Activated CD4-positive, alpha-beta T cell treated with anti-CD3 and anti-CD28 coated beads, Interleukin-2, amount 10 ng/mL, durations not matched to agents 24 days and 14 days (primary cell): ENCODE measurements at regions of chr10 and their contacts with region 1.

Region 1: DNA sequence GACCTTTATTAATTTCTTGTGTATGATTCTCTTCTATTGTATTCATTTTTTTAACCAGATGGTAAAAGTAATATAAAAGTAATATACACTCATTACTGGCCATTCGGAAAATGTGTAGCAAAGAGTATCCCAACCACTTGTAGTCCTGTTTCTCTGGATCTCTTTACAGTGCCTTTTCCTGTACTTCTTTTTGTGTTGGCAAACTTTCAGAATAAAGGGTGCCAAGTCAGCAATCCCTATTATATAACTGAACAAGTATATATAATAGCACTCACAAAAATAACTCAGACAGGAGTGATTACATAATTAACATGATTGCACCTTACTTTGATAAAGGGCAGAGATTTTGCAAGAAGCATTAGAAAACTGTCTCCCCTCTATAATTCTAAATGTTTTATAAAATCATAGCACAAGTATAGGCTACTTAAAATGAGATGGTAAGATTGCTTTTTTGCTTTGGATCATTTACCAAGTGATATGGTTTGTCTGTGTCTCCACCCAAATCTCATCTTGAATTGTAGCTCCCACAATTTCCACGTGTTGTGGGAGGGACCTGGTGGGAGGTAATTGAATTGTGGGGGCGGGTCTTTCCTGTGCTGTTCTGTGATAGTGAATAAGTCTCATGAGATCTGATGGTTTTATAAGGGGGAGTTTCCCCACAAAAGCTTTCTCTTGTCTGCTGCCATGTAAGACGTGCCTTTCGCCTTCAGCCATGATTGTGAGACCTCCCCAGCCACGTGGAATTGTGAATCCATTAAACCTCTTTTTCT is 41.5 kb upstream of the EPC1 start:
- DNase-seq: peak; percentile 30
- H3K4me3 Mint-ChIP-seq: no peak overlapping the region
- H3K27ac Mint-ChIP-seq: no peak overlapping the region
- H3K4me1 Mint-ChIP-seq: peaks cover 3% of the 10 kb centered on the region
- H3K27me3 Mint-ChIP-seq: no peaks in the 10 kb centered on the region

Region 2: DNA sequence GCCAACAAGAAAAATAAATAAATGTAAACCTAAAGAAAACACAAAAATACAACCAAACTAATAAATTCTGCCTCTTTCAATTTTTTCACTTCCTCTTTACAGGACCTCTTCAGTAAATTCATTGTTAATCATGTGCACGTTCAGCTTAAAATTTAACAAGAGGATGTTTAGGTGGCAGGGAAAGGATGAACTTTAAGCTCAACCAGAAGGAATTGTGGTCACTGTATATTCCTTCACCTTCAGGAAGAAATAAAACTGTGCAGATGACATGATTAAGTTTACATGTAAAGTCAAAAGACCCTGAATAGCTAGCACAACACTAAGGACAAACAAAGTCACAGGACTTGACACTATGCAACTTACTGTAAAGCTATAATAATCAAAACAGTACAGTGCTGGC is 365.2 kb before region 1 on chr10:
- intact Hi-C with region 1: no loop called
- DNase-seq: no peak
- H3K4me3 Mint-ChIP-seq: no peak overlapping the region
- H3K27ac Mint-ChIP-seq: no peak overlapping the region
- H3K4me1 Mint-ChIP-seq: peaks cover 3% of the 10 kb centered on the region
- H3K27me3 Mint-ChIP-seq: no peaks in the 10 kb centered on the region

Region 3: GRCh38 chr10:32308027-32308603 is 80.3 kb before region 1 on chr10:
- intact Hi-C with region 1: no loop called
- DNase-seq: no peak
- H3K4me3 Mint-ChIP-seq: no peak overlapping the region
- H3K27ac Mint-ChIP-seq: no peak overlapping the region
- H3K4me1 Mint-ChIP-seq: peaks cover 30% of the 10 kb centered on the region
- H3K27me3 Mint-ChIP-seq: no peaks in the 10 kb centered on the region

Region 4: GRCh38 chr10:32437334-32437733 is 48.9 kb after region 1 on chr10:
- intact Hi-C with region 1: loop called (anchors 2 kb)
- DNase-seq: no peak
- H3K4me3 Mint-ChIP-seq: no peak overlapping the region
- H3K27ac Mint-ChIP-seq: no peak overlapping the region
- H3K4me1 Mint-ChIP-seq: no peaks in the 10 kb centered on the region
- H3K27me3 Mint-ChIP-seq: peaks cover 7% of the 10 kb centered on the region